ENCODE measurements at regions of chr6 and their contacts with region 1.

Region 1: DNA sequence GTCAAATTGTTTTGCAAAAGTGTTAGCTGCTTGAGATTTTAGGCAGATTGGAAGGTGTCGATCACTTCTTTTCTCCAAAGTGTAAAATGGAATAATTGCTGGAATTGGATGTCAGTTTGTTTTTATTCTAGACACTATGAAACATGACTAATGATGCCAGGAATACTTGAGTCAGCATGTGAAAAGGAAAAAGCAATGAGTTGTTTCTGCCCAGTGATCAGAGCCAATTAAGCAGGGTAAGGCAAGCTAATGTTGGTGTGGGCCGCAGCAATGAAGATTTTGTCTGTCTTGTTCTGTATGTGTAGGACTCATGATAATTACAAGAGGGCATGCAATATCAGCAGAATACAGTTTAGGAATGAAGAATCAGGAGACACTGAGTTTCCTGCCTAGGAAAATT is 110.3 kb downstream of the CARMIL1 start:
- DNase-seq: no peak
- H3K4me3 ChIP-seq: peak overlapping the region; percentile 60
- H3K27ac ChIP-seq: peak overlapping the region; percentile 99
- H3K4me1 ChIP-seq: peaks cover 94% of the 10 kb centered on the region
- CTCF ChIP-seq: no peak

Region 2: GRCh38 chr6:25302677-25303128 is 86.8 kb before region 1 on chr6:
- CTCF ChIA-PET with region 1: no interaction called
- POLR2A ChIA-PET with region 1: interaction called, 5 read pairs
- intact Hi-C with region 1: loop called (anchors 1 kb)
- DNase-seq: no peak
- H3K4me3 ChIP-seq: peak overlapping the region; percentile 50
- H3K27ac ChIP-seq: peak overlapping the region; percentile 85
- H3K4me1 ChIP-seq: peaks cover 87% of the 10 kb centered on the region
- CTCF ChIP-seq: no peak

Region 3: DNA sequence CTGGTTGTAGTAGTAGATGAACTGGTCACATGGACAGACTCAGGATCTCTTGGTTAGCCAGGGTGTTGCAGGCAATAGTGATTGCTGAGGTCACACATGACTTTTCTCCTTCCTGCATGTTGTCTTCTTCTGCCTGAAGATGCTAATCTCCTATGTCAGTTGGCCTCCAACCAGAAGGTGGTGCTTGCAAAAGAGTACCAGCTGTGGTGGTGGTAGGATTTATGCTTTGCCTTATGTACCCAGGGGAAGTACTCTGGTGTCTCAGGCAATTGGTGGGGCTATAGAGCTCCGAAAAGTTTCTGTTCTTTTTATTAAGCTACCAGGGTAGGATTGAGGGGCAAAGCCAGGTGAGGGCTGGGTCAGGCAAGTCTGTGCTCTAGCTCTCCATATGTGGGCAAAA is 11.8 kb before region 1 on chr6:
- CTCF ChIA-PET with region 1: interaction called, 6 read pairs
- POLR2A ChIA-PET with region 1: interaction called, 70 read pairs
- intact Hi-C with region 1: loop called (anchors 1 kb)
- DNase-seq: peak; percentile 92
- H3K4me3 ChIP-seq: peak overlapping the region; percentile 64
- H3K27ac ChIP-seq: peak overlapping the region; percentile 82
- H3K4me1 ChIP-seq: peaks cover 76% of the 10 kb centered on the region
- CTCF ChIP-seq: peak; percentile 83

Region 4: DNA sequence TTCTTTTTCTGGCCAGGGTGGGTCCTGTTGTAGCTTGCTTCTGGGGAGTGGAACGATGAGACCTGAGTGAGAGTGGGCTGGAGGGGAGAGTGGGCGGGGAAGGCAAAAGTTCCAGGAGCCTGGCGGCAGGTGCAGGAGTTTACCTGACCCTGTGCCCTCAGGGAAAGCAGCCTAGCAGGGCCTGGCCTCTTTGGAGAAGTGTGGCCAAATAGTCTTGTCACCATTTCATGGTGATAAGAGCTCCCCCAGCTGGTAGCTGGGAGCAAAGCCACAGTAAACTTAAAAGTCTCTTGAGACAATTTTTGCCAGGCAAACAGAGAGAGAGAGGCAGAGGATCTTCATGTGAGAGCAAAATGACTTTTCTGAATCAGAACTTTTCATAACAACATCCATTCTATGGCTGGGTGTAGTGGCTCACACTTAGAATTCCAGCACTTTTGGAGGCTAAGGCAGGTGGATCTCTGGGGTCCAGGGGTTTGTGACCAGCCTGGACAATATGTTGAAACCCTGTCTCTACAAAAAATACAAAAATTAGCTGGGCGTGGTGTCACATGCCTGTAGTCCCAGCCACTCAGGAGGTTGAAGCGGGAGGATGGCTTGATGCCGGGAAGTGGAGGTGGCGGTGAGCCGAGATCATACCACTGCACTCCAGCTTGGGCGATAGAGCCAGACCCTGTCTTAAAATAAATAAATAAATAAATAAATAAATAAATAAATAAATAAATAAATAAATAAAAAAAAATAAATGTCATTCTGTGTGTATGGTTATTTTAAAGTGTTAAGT is 100.7 kb after region 1 on chr6:
- CTCF ChIA-PET with region 1: no interaction called
- POLR2A ChIA-PET with region 1: interaction called, 6 read pairs
- intact Hi-C with region 1: loop called (anchors 1 kb)
- DNase-seq: peak; percentile 93
- H3K4me3 ChIP-seq: no peak overlapping the region
- H3K27ac ChIP-seq: peak overlapping the region; percentile 55
- H3K4me1 ChIP-seq: peaks cover 23% of the 10 kb centered on the region
- CTCF ChIP-seq: peak; percentile 90

Region 5: DNA sequence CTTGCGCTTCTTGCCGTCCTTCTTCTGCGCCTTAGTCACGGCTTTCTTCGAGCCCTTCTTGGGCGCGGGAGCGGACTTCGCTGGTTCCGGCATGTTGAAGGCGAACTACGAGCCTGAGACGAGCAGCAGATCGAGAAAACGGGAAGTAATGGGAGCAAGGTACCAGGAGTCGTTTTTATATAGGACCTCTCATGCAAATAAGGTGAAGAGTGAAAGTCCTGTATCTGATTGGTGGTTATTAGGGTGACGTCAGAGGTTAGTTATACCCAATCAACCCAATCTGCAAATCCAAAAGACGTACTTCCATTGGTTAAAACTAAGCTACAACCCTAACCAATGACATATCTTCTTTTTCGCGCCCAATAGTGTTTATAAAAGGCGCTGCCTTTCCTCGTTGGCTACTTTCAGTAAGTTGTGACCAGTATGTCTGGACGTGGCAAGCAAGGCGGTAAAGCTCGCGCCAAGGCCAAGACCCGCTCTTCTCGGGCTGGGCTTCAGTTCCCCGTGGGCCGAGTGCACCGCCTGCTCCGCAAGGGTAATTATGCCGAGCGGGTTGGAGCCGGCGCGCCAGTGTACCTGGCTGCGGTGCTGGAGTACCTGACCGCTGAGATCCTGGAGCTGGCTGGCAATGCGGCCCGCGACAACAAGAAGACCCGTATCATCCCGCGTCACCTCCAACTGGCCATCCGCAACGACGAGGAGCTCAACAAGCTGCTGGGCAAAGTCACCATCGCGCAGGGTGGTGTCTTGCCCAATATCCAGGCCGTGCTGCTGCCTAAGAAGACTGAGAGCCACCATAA is 1757.4 kb after region 1 on chr6:
- CTCF ChIA-PET with region 1: no interaction called
- POLR2A ChIA-PET with region 1: interaction called, 5 read pairs
- intact Hi-C with region 1: loop called (anchors 10 kb)
- DNase-seq: peak; percentile 98
- H3K4me3 ChIP-seq: peak overlapping the region; percentile 73
- H3K27ac ChIP-seq: peak overlapping the region; percentile 99
- H3K4me1 ChIP-seq: peaks cover 60% of the 10 kb centered on the region
- CTCF ChIP-seq: no peak

Measured in OCI-LY7 (cell line).